ENCODE measurements at regions of chr3 and their contacts with region 1.

Region 1: GRCh38 chr3:57060089-57060829 is at the start of gene SPATA12:
- DNase-seq: peak; percentile 91
- ATAC-seq: peak; percentile 100
- H3K4me3 ChIP-seq: peak within 1 kb of the TSS; percentile 19 to 52 (median 40); a peak in 4 of 6 replicates
- H3K27ac ChIP-seq: peak within 1 kb of the TSS; percentile 44
- H3K4me1 ChIP-seq: peaks cover 28% of the 10 kb centered on the region
- H3K27me3 ChIP-seq: no peaks in the 10 kb centered on the region
- CTCF ChIP-seq: no peak
- EP300 ChIP-seq: no peak
- POLR2A ChIP-seq: no peak
- RAD21 ChIP-seq: no peak
- total RNA-seq, gene SPATA12: 0.09 TPM in 1 of 2 replicates, not detected in the other

Region 2: GRCh38 chr3:57078344-57078634 is 18.0 kb after region 1 on chr3:
- CTCF ChIA-PET with region 1: no interaction called
- POLR2A ChIA-PET with region 1: interaction called, 5 read pairs
- in situ Hi-C with region 1: no loop called
- intact Hi-C with region 1: loop called (anchors 2 kb)
- DNase-seq: peak; percentile 28
- ATAC-seq: peak; percentile 56
- H3K4me3 ChIP-seq: peak overlapping the region; percentile 71 to 93 (median 76)
- H3K27ac ChIP-seq: peak overlapping the region; percentile 62
- H3K4me1 ChIP-seq: peaks cover 43% of the 10 kb centered on the region
- H3K27me3 ChIP-seq: peaks cover 0 to 4% of the 10 kb centered on the region in 2 experiments; a peak in 1 of 5 replicates
- CTCF ChIP-seq: no peak
- EP300 ChIP-seq: no peak
- POLR2A ChIP-seq: no peak
- RAD21 ChIP-seq: no peak

Region 3: GRCh38 chr3:57706462-57706861 is 646.2 kb after region 1 on chr3:
- CTCF ChIA-PET with region 1: no interaction called
- POLR2A ChIA-PET with region 1: no interaction called
- in situ Hi-C with region 1: no loop called
- intact Hi-C with region 1: no loop called
- DNase-seq: no peak
- ATAC-seq: no peak
- H3K4me3 ChIP-seq: no peak overlapping the region
- H3K27ac ChIP-seq: no peak overlapping the region
- H3K4me1 ChIP-seq: peaks cover 20% of the 10 kb centered on the region
- H3K27me3 ChIP-seq: no peaks in the 10 kb centered on the region
- CTCF ChIP-seq: no peak
- EP300 ChIP-seq: no peak
- POLR2A ChIP-seq: no peak
- RAD21 ChIP-seq: no peak

Measured in HepG2 (cell line).